HepG2 (cell line): ENCODE measurements at regions of chr20 and their contacts with region 1.

Region 1: DNA sequence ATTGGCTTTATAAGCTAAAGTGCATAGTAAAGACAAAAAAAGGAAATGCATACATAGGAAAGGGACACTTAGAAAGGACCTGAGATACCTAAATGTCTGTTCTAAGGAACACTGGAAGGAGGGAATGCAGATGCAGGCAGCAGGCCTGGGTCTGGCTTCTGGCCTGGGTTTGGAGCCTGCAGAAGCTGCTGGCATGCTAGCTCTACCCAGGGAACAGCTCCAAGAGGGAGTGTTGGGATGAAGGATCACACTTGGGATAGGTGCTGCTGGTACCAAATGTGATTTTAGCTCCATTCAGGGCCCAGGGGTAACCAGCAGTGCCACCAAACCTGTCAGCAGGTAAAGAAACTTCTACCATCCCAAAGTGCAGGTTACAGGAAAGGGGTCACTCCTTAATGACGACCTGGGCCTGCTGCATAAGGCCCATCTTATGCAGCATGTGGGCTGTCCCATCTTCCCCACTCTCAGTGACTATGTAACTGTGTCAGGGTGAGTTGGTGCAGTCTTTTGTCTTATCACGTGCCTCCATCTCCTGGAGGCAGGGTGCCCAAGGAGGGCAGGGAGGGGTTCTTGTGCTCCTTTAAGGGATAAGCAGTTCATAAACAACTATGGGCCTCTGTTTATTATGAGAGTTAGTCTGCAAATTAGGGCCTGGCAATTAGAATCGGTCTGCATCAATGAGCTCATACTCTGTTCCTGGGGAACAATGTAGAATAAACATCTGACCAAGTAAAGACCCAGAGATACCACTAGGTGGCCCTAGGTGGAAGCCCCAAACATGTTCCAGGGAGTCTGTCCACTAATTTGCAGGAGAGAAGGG is 26.9 kb downstream of the DDX27 start:
- DNase-seq: peak; percentile 68
- ATAC-seq: peak; percentile 87
- H3K4me3 ChIP-seq: no peak overlapping the region
- H3K27ac ChIP-seq: no peak overlapping the region
- H3K4me1 ChIP-seq: no peaks in the 10 kb centered on the region
- H3K27me3 ChIP-seq: no peaks in the 10 kb centered on the region
- CTCF ChIP-seq: peak; percentile 79
- EP300 ChIP-seq: no peak
- POLR2A ChIP-seq: peak in 1 of 2 experiments; percentile 21; a peak in 1 of 4 replicates
- RAD21 ChIP-seq: 0 out of 2 replicates have a peak, but pooled peaks have one; percentile 51

Region 2: GRCh38 chr20:49323622-49324238 is 77.6 kb after region 1 on chr20:
- CTCF ChIA-PET with region 1: no interaction called
- POLR2A ChIA-PET with region 1: no interaction called
- in situ Hi-C with region 1: loop called (anchors 5 kb)
- intact Hi-C with region 1: loop called (anchors 1 kb)
- DNase-seq: peak; percentile 52
- ATAC-seq: peak; percentile 61
- H3K4me3 ChIP-seq: no peak overlapping the region
- H3K27ac ChIP-seq: no peak overlapping the region
- H3K4me1 ChIP-seq: 0 out of 2 replicates have a peak, but pooled peaks cover under 1% of the 10 kb centered on the region
- H3K27me3 ChIP-seq: peaks cover 10 to 76% of the 10 kb centered on the region in 2 experiments
- CTCF ChIP-seq: peak; percentile 64
- EP300 ChIP-seq: no peak
- POLR2A ChIP-seq: no peak
- RAD21 ChIP-seq: no peak